ENCODE measurements at regions of chr13 and their contacts with region 1.

Region 1: DNA sequence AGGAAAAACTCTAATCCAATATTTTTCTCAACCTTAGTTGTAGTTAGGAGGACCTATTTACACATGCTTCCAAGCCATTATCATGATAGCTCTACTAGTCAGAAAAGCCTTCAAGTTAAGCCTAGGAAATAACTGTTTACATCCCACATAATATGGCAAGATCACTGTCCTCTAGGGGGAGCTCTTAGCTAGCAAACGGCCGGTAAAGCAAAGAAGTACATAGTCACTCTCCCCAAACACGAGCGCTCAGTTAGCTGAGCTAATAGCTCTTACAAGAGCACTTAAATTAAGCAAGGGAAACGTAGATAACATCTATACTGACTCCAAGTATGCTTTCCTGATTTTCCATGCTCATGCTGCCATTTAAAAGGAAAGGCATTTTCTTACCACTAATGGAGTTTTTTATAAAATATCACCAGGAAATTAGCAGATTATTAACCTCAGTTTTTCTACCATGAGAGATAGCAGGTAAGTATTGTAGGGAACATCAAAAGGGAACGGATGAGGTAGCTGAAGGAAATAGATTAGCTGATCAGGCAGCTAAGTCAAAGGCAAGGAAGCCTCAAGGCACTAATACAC is 100.6 kb upstream of the PABPC3 start:
- DNase-seq: peak in 1 of 2 donors; percentile 81
- ATAC-seq: peak; percentile 73 to 82 (median 79)
- H3K4me3 ChIP-seq: no peak overlapping the region
- H3K4me3 Mint-ChIP-seq: no peak overlapping the region
- H3K27ac ChIP-seq: no peak overlapping the region
- H3K27ac Mint-ChIP-seq: no peak overlapping the region
- H3K4me1 ChIP-seq: no peaks in the 10 kb centered on the region
- H3K4me1 Mint-ChIP-seq: peaks cover 4 to 5% of the 10 kb centered on the region in 2 donors
- H3K27me3 ChIP-seq: no peaks in the 10 kb centered on the region
- H3K27me3 Mint-ChIP-seq: peaks cover 25 to 31% of the 10 kb centered on the region in 2 donors
- CTCF ChIP-seq: peak; percentile 86

Region 2: DNA sequence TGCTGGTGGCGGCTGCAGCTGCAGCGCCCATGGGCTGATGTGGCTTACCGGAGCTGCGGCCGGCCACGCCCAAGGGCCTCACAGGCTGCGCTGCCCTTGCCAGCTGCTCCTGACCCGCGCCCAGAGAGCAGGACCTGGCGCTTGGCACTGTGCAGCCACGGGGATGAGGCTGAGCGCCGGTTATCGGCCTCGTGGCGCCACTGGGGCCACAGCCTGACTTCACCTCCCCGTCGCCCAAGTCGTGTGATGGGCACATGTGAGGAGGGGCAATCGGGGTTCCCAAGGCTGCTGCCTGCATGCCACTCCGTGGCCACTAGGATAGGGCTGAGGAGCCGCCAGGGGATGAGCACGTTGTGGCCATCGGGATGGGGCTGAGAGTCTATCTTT is 23.4 kb after region 1 on chr13:
- intact Hi-C with region 1: no loop called
- DNase-seq: no peak
- ATAC-seq: no peak
- H3K4me3 ChIP-seq: no peak overlapping the region
- H3K4me3 Mint-ChIP-seq: no peak overlapping the region
- H3K27ac ChIP-seq: no peak overlapping the region
- H3K27ac Mint-ChIP-seq: no peak overlapping the region
- H3K4me1 ChIP-seq: no peaks in the 10 kb centered on the region
- H3K4me1 Mint-ChIP-seq: no peaks in the 10 kb centered on the region
- H3K27me3 ChIP-seq: no peaks in the 10 kb centered on the region
- H3K27me3 Mint-ChIP-seq: peaks cover 32 to 46% of the 10 kb centered on the region in 2 donors
- CTCF ChIP-seq: no peak

Region 3: DNA sequence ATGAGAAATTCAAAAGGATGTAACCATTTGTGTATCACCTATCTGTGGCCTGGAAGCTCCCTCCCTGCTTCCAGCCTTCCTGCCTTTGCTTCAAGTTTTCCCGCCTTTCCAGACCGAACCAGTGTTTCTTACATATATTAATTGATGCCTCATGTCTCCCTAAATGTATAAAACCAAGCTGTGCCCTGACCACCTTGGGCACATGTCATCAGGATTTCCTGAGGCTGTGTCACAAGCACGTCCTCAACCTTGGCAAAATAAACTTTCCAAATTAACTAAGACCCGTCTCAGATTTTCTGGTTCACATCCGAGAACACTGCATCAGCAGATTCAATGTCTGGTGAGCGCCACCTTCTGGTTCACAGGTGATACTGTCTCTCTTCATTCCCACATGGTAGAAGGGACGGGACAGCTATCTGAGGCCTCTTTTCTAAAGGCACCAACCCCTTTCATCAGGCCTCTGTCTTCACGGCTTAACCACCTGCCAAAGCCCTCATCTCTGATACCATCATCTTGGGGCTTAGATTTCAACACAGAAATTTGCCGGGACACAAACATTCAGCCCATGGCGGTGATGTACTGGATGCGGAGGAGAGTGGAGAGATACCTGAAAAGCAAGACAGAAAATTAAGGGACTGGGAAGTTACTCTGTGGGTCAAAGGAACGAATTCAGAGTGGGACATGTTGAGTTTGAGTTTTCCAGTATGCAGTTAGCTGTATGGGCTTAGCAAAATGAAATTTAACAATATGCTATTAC is 41.9 kb after region 1 on chr13:
- intact Hi-C with region 1: loop called (anchors 1 kb)
- DNase-seq: peak in 1 of 2 donors; percentile 74
- ATAC-seq: peak in 1 of 3 donors; percentile 71
- H3K4me3 ChIP-seq: no peak overlapping the region
- H3K4me3 Mint-ChIP-seq: no peak overlapping the region
- H3K27ac ChIP-seq: no peak overlapping the region
- H3K27ac Mint-ChIP-seq: no peak overlapping the region
- H3K4me1 ChIP-seq: no peaks in the 10 kb centered on the region
- H3K4me1 Mint-ChIP-seq: no peaks in the 10 kb centered on the region
- H3K27me3 ChIP-seq: peaks cover 2% of the 10 kb centered on the region
- H3K27me3 Mint-ChIP-seq: peaks cover 18 to 67% of the 10 kb centered on the region in 2 donors
- CTCF ChIP-seq: peak; percentile 52